ENCODE measurements at regions of chrX and their contacts with region 1.

Region 1: GRCh38 chrX:19887911-19888879 is 795 bp upstream of the SH3KBP1 start:
- DNase-seq: peak; percentile 44
- ATAC-seq: peak; percentile 33
- H3K4me3 Mint-ChIP-seq: peak overlapping the region; percentile 83
- H3K27ac Mint-ChIP-seq: peak overlapping the region; percentile 76
- H3K4me1 Mint-ChIP-seq: peaks cover 36% of the 10 kb centered on the region
- H3K27me3 Mint-ChIP-seq: no peaks in the 10 kb centered on the region
- CTCF ChIP-seq: no peak

Region 2: GRCh38 chrX:19410259-19410658 is 477.9 kb before region 1 on chrX:
- CTCF ChIA-PET with region 1: no interaction called
- POLR2A ChIA-PET with region 1: no interaction called
- intact Hi-C with region 1: no loop called
- DNase-seq: no peak
- ATAC-seq: no peak
- H3K4me3 Mint-ChIP-seq: no peak overlapping the region
- H3K27ac Mint-ChIP-seq: no peak overlapping the region
- H3K4me1 Mint-ChIP-seq: no peaks in the 10 kb centered on the region
- H3K27me3 Mint-ChIP-seq: peaks cover 2% of the 10 kb centered on the region
- CTCF ChIP-seq: no peak

Region 3: GRCh38 chrX:19544693-19545305 is 343.4 kb before region 1 on chrX:
- CTCF ChIA-PET with region 1: no interaction called
- POLR2A ChIA-PET with region 1: no interaction called
- intact Hi-C with region 1: loop called (anchors 1 kb)
- DNase-seq: no peak
- ATAC-seq: peak; percentile 60
- H3K4me3 Mint-ChIP-seq: no peak overlapping the region
- H3K27ac Mint-ChIP-seq: no peak overlapping the region
- H3K4me1 Mint-ChIP-seq: no peaks in the 10 kb centered on the region
- H3K27me3 Mint-ChIP-seq: no peaks in the 10 kb centered on the region
- CTCF ChIP-seq: no peak

Region 4: GRCh38 chrX:19593690-19594089 is 294.5 kb before region 1 on chrX:
- CTCF ChIA-PET with region 1: interaction called, 10 read pairs
- POLR2A ChIA-PET with region 1: no interaction called
- intact Hi-C with region 1: loop called (anchors 1 kb)
- DNase-seq: no peak
- ATAC-seq: no peak
- H3K4me3 Mint-ChIP-seq: no peak overlapping the region
- H3K27ac Mint-ChIP-seq: no peak overlapping the region
- H3K4me1 Mint-ChIP-seq: peaks cover 2% of the 10 kb centered on the region
- H3K27me3 Mint-ChIP-seq: no peaks in the 10 kb centered on the region
- CTCF ChIP-seq: no peak

Region 5: DNA sequence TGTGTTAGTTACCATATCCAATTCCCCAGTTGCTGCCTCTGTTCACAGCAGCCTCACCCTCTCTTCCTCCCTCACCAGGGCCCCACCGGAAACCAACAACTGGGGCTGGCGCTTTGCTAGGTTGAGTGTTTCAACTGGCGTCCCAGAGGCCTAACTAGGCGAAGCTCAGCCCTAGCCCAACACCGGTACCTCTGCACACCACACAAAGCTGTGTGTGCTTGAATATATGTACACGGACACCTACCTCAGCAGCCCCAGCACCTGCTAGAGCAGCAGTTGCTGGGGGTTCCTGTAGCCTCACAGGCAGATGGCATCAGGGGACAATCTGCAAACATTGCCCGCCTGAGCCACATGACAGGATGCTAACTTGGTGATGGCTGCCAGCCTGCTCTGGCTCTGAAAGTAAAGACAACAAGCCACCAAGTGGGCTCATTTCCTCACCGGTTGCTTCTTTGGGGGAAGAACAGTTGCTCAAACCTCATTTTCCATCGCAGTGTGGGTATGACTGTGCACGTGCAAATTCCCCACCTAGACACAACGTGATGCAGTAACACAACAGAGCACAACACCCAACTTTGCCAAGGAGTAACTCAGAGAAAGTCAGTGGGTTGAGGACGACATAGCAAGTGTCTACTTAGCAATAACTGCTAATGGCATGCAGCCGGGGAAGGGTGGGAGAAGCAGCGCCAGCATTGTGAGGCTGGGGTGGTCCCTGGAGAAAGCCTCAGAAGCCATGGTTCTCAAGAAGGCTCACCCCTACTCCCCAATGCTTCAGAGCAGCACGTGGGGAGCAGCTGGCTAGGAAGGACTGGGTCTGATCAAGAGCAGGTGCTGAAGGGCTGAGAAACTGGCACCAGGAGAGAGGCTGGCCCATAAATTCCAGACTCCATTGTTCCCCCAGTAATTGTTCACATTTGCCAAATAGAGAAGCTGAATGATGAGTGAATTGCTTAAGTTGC is 140.3 kb before region 1 on chrX:
- CTCF ChIA-PET with region 1: interaction called, 9 read pairs
- POLR2A ChIA-PET with region 1: interaction called, 4 read pairs
- intact Hi-C with region 1: loop called (anchors 1 kb)
- DNase-seq: peak; percentile 43
- ATAC-seq: peak; percentile 65
- H3K4me3 Mint-ChIP-seq: peak overlapping the region; percentile 35
- H3K27ac Mint-ChIP-seq: peak overlapping the region; percentile 92
- H3K4me1 Mint-ChIP-seq: peaks cover 98% of the 10 kb centered on the region
- H3K27me3 Mint-ChIP-seq: no peaks in the 10 kb centered on the region
- CTCF ChIP-seq: no peak

Region 6: GRCh38 chrX:19849464-19850080 is 38.6 kb before region 1 on chrX:
- CTCF ChIA-PET with region 1: interaction called, 3 read pairs
- POLR2A ChIA-PET with region 1: interaction called, 4 read pairs
- intact Hi-C with region 1: loop called (anchors 1 kb)
- DNase-seq: no peak
- ATAC-seq: peak; percentile 91
- H3K4me3 Mint-ChIP-seq: peak overlapping the region; percentile 70
- H3K27ac Mint-ChIP-seq: peak overlapping the region; percentile 89
- H3K4me1 Mint-ChIP-seq: peaks cover 66% of the 10 kb centered on the region
- H3K27me3 Mint-ChIP-seq: no peaks in the 10 kb centered on the region
- CTCF ChIP-seq: no peak

Region 7: DNA sequence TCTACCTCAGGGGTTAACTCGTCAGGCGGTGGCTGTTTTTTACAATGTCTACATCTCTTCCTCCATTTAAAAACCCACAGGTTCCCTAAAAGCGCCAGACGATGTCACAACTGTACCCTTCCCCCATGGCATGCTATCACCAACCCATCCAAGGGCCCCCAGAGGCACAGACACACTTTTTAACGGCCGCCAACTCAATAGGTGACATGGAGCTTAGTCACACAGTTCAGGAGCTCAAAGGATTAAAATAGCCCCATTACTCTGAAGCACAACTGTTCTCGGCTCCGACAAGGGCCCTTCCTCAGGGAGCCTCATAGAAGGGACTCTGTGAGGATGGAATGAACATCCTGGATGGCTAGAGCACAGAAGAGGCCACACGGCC is 13.2 kb before region 1 on chrX:
- CTCF ChIA-PET with region 1: no interaction called
- POLR2A ChIA-PET with region 1: interaction called, 9 read pairs
- intact Hi-C with region 1: loop called (anchors 1 kb)
- DNase-seq: no peak
- ATAC-seq: peak; percentile 79
- H3K4me3 Mint-ChIP-seq: peak overlapping the region; percentile 69
- H3K27ac Mint-ChIP-seq: peak overlapping the region; percentile 84
- H3K4me1 Mint-ChIP-seq: peaks cover 86% of the 10 kb centered on the region
- H3K27me3 Mint-ChIP-seq: no peaks in the 10 kb centered on the region
- CTCF ChIP-seq: no peak

Measured in activated B cell treated with CpG ODN at 0.5 μM for 24 hours (primary cell).